Heart left ventricle (tissue), 16 donors: ENCODE measurements at regions of chr2 and their contacts with region 1.

Region 1: DNA sequence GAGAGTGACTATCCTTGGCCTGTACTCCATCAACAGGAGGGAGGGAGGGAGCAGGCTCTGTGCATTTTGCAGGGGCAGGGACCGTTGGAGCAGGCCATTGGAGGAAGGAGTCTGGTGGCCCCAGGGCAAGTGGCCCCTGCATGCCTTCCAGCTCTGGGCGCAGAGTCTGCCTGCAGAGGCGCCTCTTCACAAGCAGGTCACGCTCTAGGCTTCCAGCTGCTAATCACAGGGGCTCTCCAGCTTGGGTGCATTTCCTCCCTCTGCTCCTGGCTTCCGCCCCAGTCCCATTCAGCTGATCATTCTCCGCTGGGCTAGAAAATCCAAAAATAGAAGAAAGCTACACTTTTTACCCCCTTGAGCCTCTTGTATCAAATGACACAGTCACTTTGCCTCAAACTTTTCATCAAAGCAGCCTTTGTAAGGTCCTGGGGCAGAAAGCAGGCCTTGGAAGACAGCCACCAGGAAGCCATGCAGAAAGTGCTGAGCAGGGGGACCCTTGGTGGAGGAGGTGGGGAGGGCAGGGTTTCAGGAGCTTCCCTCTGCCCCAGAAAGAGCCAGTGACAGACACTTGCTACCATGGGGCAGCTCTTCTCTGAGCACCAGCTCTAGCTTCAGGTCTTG is 11.3 kb downstream of the TMEM247 start:
- DNase-seq: peak; percentile 64 to 86 (median 79)
- ATAC-seq: peak; percentile 56 to 89 (median 72)
- H3K4me3 ChIP-seq: no peak overlapping the region
- H3K27ac ChIP-seq: peak overlapping the region; percentile 3 to 93 (median 79)
- H3K4me1 ChIP-seq: peaks cover 0 to 55% (median 44%) of the 10 kb centered on the region in 12 donors
- H3K27me3 ChIP-seq: no peaks in the 10 kb centered on the region
- CTCF ChIP-seq: peak in 9 of 12 donors; percentile 3 to 54 (median 31)
- POLR2A ChIP-seq: no peak

Region 2: DNA sequence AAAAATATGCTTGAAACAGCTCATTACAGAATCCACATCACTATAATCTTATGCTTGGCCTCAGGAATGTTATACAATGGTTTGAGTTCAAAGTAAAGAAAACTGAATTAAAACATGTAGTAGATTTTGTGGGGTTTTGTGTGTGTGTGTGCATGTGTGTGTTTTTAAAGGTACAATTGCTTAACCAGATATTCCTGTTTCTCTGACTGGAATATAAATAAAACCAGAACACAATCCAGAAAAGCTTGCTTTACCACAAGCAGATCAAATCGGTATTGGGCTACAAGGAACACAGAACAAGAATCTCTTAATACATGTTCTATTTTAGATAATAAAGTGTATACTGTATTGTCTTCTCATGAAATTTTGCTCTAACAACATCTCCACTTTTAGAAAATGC is 98.7 kb after region 1 on chr2:
- intact Hi-C with region 1: loop called in 1 of 10 experiments (anchors 10 kb)
- DNase-seq: no peak
- ATAC-seq: no peak
- H3K4me3 ChIP-seq: no peak overlapping the region
- H3K27ac ChIP-seq: no peak overlapping the region
- H3K4me1 ChIP-seq: peaks cover 0 to 2% (median 0%) of the 10 kb centered on the region in 12 donors
- H3K27me3 ChIP-seq: no peaks in the 10 kb centered on the region
- CTCF ChIP-seq: no peak
- POLR2A ChIP-seq: no peak

Region 3: GRCh38 chr2:46690825-46691224 is 200.2 kb after region 1 on chr2:
- intact Hi-C with region 1: no loop called
- DNase-seq: no peak
- ATAC-seq: no peak
- H3K4me3 ChIP-seq: no peak overlapping the region
- H3K27ac ChIP-seq: no peak overlapping the region
- H3K4me1 ChIP-seq: no peaks in the 10 kb centered on the region
- H3K27me3 ChIP-seq: no peaks in the 10 kb centered on the region
- CTCF ChIP-seq: no peak
- POLR2A ChIP-seq: no peak

Region 4: GRCh38 chr2:47300609-47301276 is 810.1 kb after region 1 on chr2:
- intact Hi-C with region 1: no loop called
- DNase-seq: no peak
- ATAC-seq: peak in 3 of 4 donors; percentile 53 to 78 (median 55)
- H3K4me3 ChIP-seq: no peak overlapping the region
- H3K27ac ChIP-seq: peak overlapping the region in 1 of 12 donors; percentile 11
- H3K4me1 ChIP-seq: peaks cover 0 to 61% (median 0%) of the 10 kb centered on the region in 12 donors
- H3K27me3 ChIP-seq: no peaks in the 10 kb centered on the region
- CTCF ChIP-seq: no peak
- POLR2A ChIP-seq: no peak